ENCODE measurements at regions of chr1 and their contacts with region 1.

Region 1: DNA sequence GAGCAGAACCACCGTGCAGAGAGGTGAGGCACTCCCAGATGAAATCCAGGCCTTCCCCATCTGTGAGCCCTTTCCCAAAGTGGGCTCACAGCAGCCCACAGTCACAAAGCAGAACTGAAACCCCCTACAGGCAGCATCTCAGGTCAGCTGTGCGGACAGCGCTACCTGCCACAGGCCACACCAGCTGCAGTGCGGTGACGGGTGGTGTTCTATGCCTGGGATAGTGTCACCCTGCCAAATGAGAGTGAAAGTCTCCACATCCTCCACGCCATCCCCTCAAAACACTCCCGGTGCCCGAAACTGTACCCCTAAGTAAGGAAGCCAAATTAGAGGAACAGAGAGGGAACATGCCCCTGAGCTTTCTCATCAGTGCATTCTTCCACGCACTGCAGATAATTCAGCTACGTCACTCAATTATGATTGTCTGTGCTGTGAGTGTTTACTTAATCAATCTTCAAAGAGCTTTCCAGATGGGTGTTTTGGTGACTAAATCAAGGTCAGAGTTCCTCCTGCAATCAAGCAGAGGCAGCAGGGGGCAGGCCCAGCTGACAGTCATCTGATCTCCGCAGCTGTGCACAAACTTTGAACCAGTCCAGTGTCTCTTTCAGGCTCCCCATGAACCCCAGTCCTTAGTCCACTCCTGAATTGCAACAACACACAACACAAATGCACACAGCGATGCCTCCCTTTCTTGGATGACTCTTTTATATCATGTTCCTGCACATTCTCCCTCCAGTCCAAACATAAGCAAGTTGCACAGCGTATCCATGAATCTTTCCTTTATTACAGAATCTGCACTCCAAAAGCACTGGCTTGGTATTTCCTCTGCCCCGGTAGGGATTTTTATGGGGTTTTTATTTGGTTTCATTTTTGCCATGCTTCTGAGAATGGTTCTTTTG is 150.0 kb downstream of the TOMM20 start:
- DNase-seq: peak; percentile 52
- H3K4me3 ChIP-seq: no peak overlapping the region
- H3K27ac ChIP-seq: peak overlapping the region; percentile 44
- H3K4me1 ChIP-seq: peaks cover 59% of the 10 kb centered on the region
- H3K27me3 ChIP-seq: no peaks in the 10 kb centered on the region
- CTCF ChIP-seq: peak in 1 of 2 donors; percentile 6

Region 2: DNA sequence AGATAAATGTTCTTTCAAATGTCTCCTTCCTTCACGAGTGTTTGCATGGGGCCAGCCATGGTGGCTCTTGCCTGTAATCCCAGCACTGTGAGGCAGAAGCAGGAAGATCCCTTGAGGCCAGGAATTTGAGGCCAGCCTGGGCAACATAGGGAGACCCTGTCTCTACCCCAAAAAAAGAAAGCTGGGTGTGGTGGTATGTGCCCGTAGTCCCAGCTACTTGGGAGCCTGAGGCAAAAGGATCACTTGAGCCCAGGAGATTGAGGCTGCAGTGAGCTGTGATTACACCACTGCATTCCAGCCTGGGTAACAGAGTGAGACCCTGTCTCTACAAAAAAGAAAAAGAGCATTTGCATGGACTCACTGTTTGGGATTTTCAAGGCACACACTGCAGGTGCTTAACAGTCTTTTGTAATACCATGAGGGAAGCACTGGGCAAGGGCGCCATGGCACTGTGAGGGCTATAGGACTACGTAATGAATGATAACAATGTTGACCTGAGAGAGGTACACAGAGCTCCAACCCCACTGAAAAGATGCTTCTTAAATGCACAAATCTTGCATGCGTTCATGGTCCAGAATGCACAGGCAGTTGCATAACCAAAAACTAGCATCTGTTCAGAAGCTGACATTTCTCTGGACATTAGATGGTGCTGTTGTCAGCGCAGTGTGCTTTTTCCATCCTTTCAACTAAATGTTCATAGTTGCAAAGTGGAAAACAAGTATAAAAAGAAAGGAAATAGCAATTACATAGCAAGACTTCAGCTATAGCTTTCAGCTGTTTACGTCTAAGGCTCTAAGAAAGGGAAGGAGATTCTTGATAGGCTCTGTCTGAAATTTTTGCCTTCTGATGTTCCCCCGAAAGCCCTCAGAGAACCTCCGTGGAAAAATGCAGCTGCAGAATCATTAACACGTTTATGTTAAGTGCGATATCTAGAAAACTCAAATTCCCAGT is 491.9 kb before region 1 on chr1:
- CTCF ChIA-PET with region 1: no interaction called
- dilution Hi-C with region 1: loop called (anchors 5 kb)
- in situ Hi-C with region 1: no loop called
- intact Hi-C with region 1: no loop called
- DNase-seq: peak; percentile 60
- H3K4me3 ChIP-seq: no peak overlapping the region
- H3K27ac ChIP-seq: no peak overlapping the region
- H3K4me1 ChIP-seq: peaks cover 8% of the 10 kb centered on the region
- H3K27me3 ChIP-seq: no peaks in the 10 kb centered on the region
- CTCF ChIP-seq: peak; percentile 79 to 83

Region 3: DNA sequence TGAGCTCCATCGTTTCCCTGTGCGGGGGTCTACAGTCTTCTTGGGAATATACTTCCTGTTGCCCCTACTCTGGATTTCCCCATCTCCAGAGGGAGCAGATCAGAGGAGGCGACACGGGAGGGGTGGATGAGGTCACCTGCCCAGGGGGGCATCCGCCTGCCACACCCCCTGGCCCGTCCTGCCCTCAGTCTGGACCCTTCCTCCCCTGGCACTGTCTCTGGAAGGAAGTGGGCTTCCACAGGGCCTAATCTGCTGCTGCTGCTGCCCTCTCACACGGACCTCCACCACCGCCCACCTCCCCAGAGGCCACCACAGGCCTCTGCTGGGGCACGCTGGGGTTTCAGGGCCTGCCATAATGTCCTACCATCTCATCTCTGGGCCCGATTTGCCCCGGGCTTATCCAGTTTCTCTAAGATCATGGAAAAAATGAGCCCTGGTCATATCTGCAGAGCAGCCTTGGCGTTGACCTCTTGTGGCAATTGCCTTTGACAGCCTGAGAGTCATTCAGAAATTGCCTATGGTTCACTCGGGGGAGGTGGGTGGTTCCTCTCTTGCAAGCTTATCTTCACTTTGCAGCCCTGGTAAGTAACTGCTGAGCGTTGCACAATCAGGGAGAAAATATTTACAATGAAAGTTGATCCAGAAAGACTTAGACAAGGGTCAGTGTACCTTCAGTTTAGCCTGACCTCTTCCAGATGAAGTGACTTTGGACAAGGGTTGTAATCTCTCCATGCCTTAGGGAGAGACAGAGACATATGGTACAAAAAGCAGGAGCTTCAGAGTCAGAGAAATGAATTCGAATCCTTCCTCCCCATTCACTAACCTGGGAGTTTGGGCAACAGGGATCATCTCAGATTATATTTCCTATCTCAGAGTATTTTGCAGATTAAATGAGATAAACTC is 102.4 kb before region 1 on chr1:
- CTCF ChIA-PET with region 1: no interaction called
- dilution Hi-C with region 1: no loop called
- in situ Hi-C with region 1: no loop called
- intact Hi-C with region 1: no loop called
- DNase-seq: no peak
- H3K4me3 ChIP-seq: no peak overlapping the region
- H3K27ac ChIP-seq: no peak overlapping the region
- H3K4me1 ChIP-seq: peaks cover 9% of the 10 kb centered on the region
- H3K27me3 ChIP-seq: no peaks in the 10 kb centered on the region
- CTCF ChIP-seq: no peak

Region 4: GRCh38 chr1:234887016-234887900 is 91.4 kb before region 1 on chr1:
- CTCF ChIA-PET with region 1: no interaction called
- dilution Hi-C with region 1: no loop called
- in situ Hi-C with region 1: no loop called
- intact Hi-C with region 1: no loop called
- DNase-seq: no peak
- H3K4me3 ChIP-seq: no peak overlapping the region
- H3K27ac ChIP-seq: no peak overlapping the region
- H3K4me1 ChIP-seq: peaks cover 18% of the 10 kb centered on the region
- H3K27me3 ChIP-seq: no peaks in the 10 kb centered on the region
- CTCF ChIP-seq: no peak

Region 5: GRCh38 chr1:234925440-234926263 is 53.0 kb before region 1 on chr1:
- CTCF ChIA-PET with region 1: no interaction called
- dilution Hi-C with region 1: no loop called
- in situ Hi-C with region 1: no loop called
- intact Hi-C with region 1: loop called (anchors 5 kb)
- DNase-seq: peak; percentile 99
- H3K4me3 ChIP-seq: no peak overlapping the region
- H3K27ac ChIP-seq: peak overlapping the region; percentile 60
- H3K4me1 ChIP-seq: peaks cover 16% of the 10 kb centered on the region
- H3K27me3 ChIP-seq: no peaks in the 10 kb centered on the region
- CTCF ChIP-seq: no peak

Region 6: DNA sequence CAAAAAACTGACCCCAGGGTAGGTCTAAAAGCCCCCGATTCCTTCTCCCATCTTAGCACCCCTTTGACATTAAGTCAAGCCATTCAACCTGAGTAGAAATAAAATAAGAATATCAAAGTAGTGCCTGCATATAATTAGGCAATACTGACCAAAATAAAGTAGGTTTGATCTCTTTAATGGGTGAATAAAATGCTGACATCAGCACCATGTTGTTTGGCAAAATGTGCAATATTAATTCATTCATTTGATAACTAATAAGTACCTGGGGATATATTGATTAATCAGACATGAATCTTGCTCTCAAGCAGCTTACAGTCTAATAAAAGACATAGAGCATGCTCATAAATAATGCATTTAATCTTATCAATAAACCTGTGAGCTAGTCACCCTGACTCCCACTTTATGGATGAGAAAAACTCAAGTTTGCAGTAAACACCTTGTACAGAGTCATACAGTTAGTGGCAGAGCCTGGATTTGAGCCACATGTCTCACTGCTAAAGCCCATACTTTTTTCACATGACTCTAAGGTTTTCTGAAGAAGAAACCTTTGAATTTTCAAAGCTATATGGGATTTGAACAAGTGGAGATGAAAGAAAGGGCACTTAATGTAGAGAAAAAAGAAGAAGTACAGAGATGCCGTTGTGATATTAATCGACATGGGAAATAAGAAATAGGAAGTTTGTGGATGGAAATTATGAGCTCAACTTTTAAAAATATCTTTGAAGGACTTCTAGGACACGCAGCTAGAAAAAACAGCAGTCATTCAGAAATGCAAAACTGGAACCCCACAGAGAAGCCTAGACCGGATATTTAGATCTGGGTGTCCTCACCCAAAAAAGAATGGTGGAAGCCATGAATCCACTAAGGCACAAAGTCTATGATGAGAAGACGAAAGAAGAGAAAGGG is 34.0 kb before region 1 on chr1:
- CTCF ChIA-PET with region 1: no interaction called
- dilution Hi-C with region 1: no loop called
- in situ Hi-C with region 1: no loop called
- intact Hi-C with region 1: no loop called
- DNase-seq: no peak
- H3K4me3 ChIP-seq: no peak overlapping the region
- H3K27ac ChIP-seq: no peak overlapping the region
- H3K4me1 ChIP-seq: no peaks in the 10 kb centered on the region
- H3K27me3 ChIP-seq: no peaks in the 10 kb centered on the region
- CTCF ChIP-seq: no peak

Region 7: DNA sequence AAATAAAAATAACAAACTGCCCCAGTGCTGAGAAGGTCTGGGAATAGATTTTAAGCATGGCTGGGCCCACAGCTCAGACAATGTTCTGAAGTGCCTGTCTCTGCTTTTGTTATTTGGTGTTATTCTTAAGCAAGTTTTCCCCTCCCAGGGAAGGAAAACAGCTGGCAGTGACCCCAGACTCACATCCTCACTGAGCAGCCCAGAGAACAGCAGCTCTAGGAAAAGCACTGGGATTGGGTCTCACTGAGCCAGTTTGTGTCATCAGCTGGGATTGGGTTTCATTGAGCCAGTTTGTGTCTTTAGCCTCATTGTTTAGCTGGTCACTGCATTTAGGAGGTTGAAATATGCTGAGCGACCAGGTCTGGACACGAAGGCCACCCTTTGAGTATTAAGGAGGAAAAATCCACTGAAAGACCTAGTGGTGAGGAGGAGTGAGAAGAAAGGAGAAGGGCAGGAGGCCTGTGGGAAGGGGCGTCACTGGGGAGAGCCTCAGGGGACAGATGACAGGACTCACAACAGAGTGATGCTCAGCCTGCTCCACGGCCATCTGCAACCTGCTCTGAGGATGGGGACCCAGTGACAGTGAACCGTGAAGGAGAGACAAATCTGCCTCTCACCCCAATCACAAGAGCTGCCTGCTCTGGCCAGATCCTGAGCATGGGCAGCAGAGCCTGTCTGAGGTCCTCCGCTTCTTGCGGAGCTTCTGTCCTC is 46.2 kb after region 1 on chr1:
- CTCF ChIA-PET with region 1: no interaction called
- dilution Hi-C with region 1: loop called (anchors 5 kb)
- in situ Hi-C with region 1: no loop called
- intact Hi-C with region 1: no loop called
- DNase-seq: no peak
- H3K4me3 ChIP-seq: no peak overlapping the region
- H3K27ac ChIP-seq: no peak overlapping the region
- H3K4me1 ChIP-seq: peaks cover 5% of the 10 kb centered on the region
- H3K27me3 ChIP-seq: no peaks in the 10 kb centered on the region
- CTCF ChIP-seq: no peak